ENCODE measurements at regions of chr10 and their contacts with region 1.

Region 1: DNA sequence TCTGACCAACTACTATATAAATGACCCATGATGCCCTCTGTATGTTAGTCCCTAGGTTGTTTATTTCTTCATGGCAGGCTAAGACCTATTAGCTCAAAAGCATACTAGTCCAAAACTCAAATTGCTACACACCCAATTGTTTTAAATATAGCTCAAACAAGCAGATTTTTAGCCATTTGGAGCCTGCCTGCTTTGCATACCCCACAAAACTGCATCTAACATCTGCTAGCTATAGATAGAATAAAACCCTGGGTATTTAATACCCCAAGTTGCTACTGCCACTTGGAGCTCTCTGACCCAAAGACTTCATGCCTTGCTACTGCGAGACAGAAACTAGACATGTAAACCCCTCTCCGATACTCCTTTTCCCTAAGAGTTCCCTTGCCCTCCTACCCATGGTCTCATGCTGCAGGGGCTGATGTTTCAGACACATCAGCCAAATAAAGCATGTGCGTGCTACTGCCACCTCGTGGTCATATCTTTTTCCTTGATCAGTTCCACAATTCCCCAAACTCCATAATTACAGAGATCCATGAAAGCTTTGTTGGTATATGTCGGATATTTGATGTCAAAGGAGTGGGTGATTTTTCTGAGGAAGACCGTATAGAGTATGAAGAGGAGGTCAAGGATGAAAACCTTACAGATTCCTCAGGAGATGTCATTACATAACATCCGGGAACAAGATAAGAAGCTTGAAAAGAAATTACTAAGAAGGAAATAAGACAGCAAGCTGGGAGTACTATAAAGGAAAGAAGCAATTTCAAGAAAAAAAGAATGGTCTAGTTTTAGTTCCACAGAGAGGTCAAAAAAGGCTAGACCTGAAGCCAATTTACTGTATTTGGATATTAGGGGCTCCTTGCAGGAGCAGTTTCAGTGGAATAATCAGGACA is 386.6 kb downstream of the SH2D4B start:
- DNase-seq: no peak
- H3K4me3 Mint-ChIP-seq: no peak overlapping the region
- H3K27ac Mint-ChIP-seq: no peak overlapping the region
- H3K4me1 Mint-ChIP-seq: no peaks in the 10 kb centered on the region
- H3K27me3 Mint-ChIP-seq: peaks cover 8% of the 10 kb centered on the region

Region 2: GRCh38 chr10:80662577-80663261 is 261.6 kb before region 1 on chr10:
- intact Hi-C with region 1: loop called (anchors 1 kb)
- DNase-seq: peak; percentile 26
- H3K4me3 Mint-ChIP-seq: no peak overlapping the region
- H3K27ac Mint-ChIP-seq: no peak overlapping the region
- H3K4me1 Mint-ChIP-seq: peaks cover 6% of the 10 kb centered on the region
- H3K27me3 Mint-ChIP-seq: peaks cover 7% of the 10 kb centered on the region

Region 3: DNA sequence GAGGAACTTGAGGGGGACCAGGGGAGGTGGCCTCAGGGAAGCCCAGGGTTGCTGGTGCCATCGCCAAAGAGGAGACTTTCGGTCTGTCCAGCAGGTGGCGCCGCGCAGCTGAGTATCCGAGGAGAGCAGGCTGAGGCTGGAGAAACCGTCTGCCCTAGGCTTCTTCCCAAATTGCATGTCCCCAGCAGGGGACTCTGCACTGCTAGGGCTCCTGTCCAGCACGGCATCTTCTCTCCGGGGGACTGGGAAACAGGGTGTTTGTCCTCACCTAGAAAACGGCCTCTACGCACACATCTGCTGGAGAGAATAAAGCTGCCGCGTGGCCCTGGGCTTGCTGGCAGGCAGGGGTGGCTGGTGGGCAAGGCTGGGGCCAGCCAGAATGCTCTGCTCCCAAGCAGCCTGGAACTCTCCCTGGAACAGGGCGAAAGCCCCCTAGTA is 224.7 kb before region 1 on chr10:
- intact Hi-C with region 1: loop called (anchors 1 kb)
- DNase-seq: peak; percentile 44
- H3K4me3 Mint-ChIP-seq: no peak overlapping the region
- H3K27ac Mint-ChIP-seq: no peak overlapping the region
- H3K4me1 Mint-ChIP-seq: no peaks in the 10 kb centered on the region
- H3K27me3 Mint-ChIP-seq: no peaks in the 10 kb centered on the region

Region 4: GRCh38 chr10:80786322-80786721 is 138.0 kb before region 1 on chr10:
- intact Hi-C with region 1: no loop called
- DNase-seq: no peak
- H3K4me3 Mint-ChIP-seq: no peak overlapping the region
- H3K27ac Mint-ChIP-seq: no peak overlapping the region
- H3K4me1 Mint-ChIP-seq: no peaks in the 10 kb centered on the region
- H3K27me3 Mint-ChIP-seq: peaks cover 2% of the 10 kb centered on the region

Region 5: GRCh38 chr10:80938903-80939302 is 14.6 kb after region 1 on chr10:
- intact Hi-C with region 1: no loop called
- DNase-seq: no peak
- H3K4me3 Mint-ChIP-seq: no peak overlapping the region
- H3K27ac Mint-ChIP-seq: no peak overlapping the region
- H3K4me1 Mint-ChIP-seq: peaks cover 7% of the 10 kb centered on the region
- H3K27me3 Mint-ChIP-seq: peaks cover 7% of the 10 kb centered on the region

Measured in activated T-helper 1 cell treated with anti-CD3 and anti-CD28 coated beads, Interleukin-12 subunit alpha, Interleukin-12 subunit beta, Interleukin-2, Interleukin-4 antibody, amounts not matched to agents 30 ng/mL and 10 ng/mL and 1 ng/mL, durations not matched to agents 14 hours and 24 hours and 36 hours (primary cell).